Caco-2 (cell line): ENCODE measurements at regions of chr16 and their contacts with region 1.

Region 1: GRCh38 chr16:9481747-9482730 is 390.6 kb downstream of the HAPSTR1 start:
- DNase-seq: no peak
- H3K4me3 ChIP-seq: no peak overlapping the region
- H3K4me3 Mint-ChIP-seq: no peak overlapping the region
- H3K27ac Mint-ChIP-seq: no peak overlapping the region
- H3K4me1 ChIP-seq: no peaks in the 10 kb centered on the region
- H3K4me1 Mint-ChIP-seq: no peaks in the 10 kb centered on the region
- H3K27me3 ChIP-seq: no peaks in the 10 kb centered on the region
- H3K27me3 Mint-ChIP-seq: no peaks in the 10 kb centered on the region
- CTCF ChIP-seq: no peak

Region 2: DNA sequence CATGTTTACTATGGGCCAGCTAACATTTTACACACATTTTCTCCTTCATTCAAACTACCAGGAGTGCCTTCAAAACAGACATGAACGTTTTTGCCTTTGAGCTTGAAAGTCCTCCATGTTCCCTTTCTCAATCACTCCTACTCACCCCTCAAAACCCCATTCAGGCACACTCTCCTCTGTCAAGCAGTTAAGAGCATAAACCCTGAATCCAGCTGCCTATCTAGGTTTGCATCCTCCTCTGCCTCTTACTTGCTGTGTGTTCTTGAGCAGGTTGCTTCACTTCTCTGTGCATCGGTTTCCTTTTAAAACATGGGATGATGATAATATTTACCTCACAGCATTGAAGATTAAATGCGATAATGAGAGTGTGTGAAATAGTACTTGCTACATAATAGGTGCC is 175.3 kb before region 1 on chr16:
- CTCF ChIA-PET with region 1: no interaction called
- POLR2A ChIA-PET with region 1: no interaction called
- intact Hi-C with region 1: no loop called
- DNase-seq: no peak
- H3K4me3 ChIP-seq: no peak overlapping the region
- H3K4me3 Mint-ChIP-seq: no peak overlapping the region
- H3K27ac Mint-ChIP-seq: no peak overlapping the region
- H3K4me1 ChIP-seq: peaks cover 9% of the 10 kb centered on the region; the same call in 1 of the 2 replicates
- H3K4me1 Mint-ChIP-seq: no peaks in the 10 kb centered on the region
- H3K27me3 ChIP-seq: no peaks in the 10 kb centered on the region
- H3K27me3 Mint-ChIP-seq: no peaks in the 10 kb centered on the region
- CTCF ChIP-seq: no peak

Region 3: GRCh38 chr16:9408297-9408878 is 73.7 kb before region 1 on chr16:
- CTCF ChIA-PET with region 1: no interaction called
- POLR2A ChIA-PET with region 1: no interaction called
- intact Hi-C with region 1: no loop called
- DNase-seq: no peak
- H3K4me3 ChIP-seq: no peak overlapping the region
- H3K4me3 Mint-ChIP-seq: no peak overlapping the region
- H3K27ac Mint-ChIP-seq: no peak overlapping the region
- H3K4me1 ChIP-seq: no peaks in the 10 kb centered on the region
- H3K4me1 Mint-ChIP-seq: no peaks in the 10 kb centered on the region
- H3K27me3 ChIP-seq: no peaks in the 10 kb centered on the region
- H3K27me3 Mint-ChIP-seq: peaks cover 3% of the 10 kb centered on the region
- CTCF ChIP-seq: no peak

Region 4: DNA sequence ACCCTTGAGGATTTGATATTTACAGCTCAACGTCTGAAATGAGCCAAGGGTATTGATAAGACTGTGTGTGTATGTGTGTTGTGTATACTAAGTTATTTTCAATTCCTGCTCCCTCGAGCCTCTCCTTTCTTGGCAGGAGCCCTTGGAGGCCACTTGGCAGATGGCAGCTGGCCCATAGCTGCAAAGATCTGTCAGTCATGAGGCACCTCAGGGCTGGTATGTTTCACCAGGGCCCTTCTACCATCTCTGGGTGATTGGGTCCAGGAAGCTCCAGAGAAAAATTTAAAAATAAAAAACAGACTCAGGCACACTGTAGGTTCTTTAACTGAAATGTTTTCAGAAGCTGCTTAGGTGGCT is 34.9 kb before region 1 on chr16:
- CTCF ChIA-PET with region 1: no interaction called
- POLR2A ChIA-PET with region 1: no interaction called
- intact Hi-C with region 1: loop called (anchors 1 kb)
- DNase-seq: no peak
- H3K4me3 ChIP-seq: no peak overlapping the region
- H3K4me3 Mint-ChIP-seq: no peak overlapping the region
- H3K27ac Mint-ChIP-seq: no peak overlapping the region
- H3K4me1 ChIP-seq: no peaks in the 10 kb centered on the region
- H3K4me1 Mint-ChIP-seq: peaks cover 8% of the 10 kb centered on the region
- H3K27me3 ChIP-seq: no peaks in the 10 kb centered on the region
- H3K27me3 Mint-ChIP-seq: peaks cover 2% of the 10 kb centered on the region
- CTCF ChIP-seq: no peak